Prostate gland (tissue), 2 donors: ENCODE measurements at regions of chr2 and their contacts with region 1.

Region 1: GRCh38 chr2:11446733-11447248 is 19.2 kb downstream of the E2F6 start:
- DNase-seq: peak; percentile 53
- H3K4me3 ChIP-seq: no peak overlapping the region
- H3K27ac ChIP-seq: no peak overlapping the region
- H3K4me1 ChIP-seq: no peaks in the 10 kb centered on the region
- H3K27me3 ChIP-seq: no peaks in the 10 kb centered on the region
- CTCF ChIP-seq: peak; percentile 65 to 78 (median 77)
- POLR2A ChIP-seq: no peak

Region 2: GRCh38 chr2:11129598-11130449 is 317.0 kb before region 1 on chr2:
- intact Hi-C with region 1: loop called (anchors 2 kb)
- DNase-seq: peak; percentile 76
- H3K4me3 ChIP-seq: peak overlapping the region; percentile 25 to 32
- H3K27ac ChIP-seq: peak overlapping the region; percentile 52 to 60
- H3K4me1 ChIP-seq: peaks cover 7% of the 10 kb centered on the region
- H3K27me3 ChIP-seq: no peaks in the 10 kb centered on the region
- CTCF ChIP-seq: peak in 3 of 4 experiments; percentile 30 to 62 (median 57)
- POLR2A ChIP-seq: peak; percentile 24

Region 3: DNA sequence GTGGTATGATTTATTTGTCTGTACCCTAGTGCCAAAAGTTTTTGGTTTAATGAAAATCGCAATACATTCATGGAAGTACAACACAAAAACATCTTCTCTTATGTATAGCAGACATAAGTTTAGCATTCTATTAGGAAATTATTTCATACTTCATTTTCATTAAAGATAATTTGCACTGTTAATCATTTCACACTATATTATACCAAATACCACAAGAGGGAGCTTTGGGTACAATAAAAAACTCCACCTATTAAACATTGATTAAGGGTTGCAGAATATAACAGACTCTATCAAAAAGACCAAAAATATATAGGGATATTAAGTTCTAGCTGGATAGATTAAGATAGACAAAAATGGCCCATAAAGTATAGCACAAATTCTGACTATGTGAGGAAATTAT is 212.5 kb before region 1 on chr2:
- intact Hi-C with region 1: loop called (anchors 10 kb)
- DNase-seq: no peak
- H3K4me3 ChIP-seq: no peak overlapping the region
- H3K27ac ChIP-seq: no peak overlapping the region
- H3K4me1 ChIP-seq: no peaks in the 10 kb centered on the region
- H3K27me3 ChIP-seq: no peaks in the 10 kb centered on the region
- CTCF ChIP-seq: peak in 3 of 4 experiments; percentile 52 to 67 (median 66)
- POLR2A ChIP-seq: no peak